ENCODE measurements at regions of chr4 and their contacts with region 1.

Region 1: GRCh38 chr4:101347557-101348366 is 436 bp upstream of the PPP3CA start:
- DNase-seq: peak; percentile 95 to 99 (median 98)
- ATAC-seq: peak; percentile 92
- H3K4me3 ChIP-seq: peak overlapping the region; percentile 99
- H3K4me3 Mint-ChIP-seq: peak overlapping the region; percentile 93 to 99 (median 98)
- H3K27ac ChIP-seq: peak overlapping the region; percentile 78
- H3K27ac Mint-ChIP-seq: peak overlapping the region; percentile 86 to 96 (median 93)
- H3K4me1 ChIP-seq: peaks cover 7 to 15% of the 10 kb centered on the region in 2 donors
- H3K4me1 Mint-ChIP-seq: peaks cover 23 to 40% (median 35%) of the 10 kb centered on the region in 7 donors
- H3K27me3 ChIP-seq: no peaks in the 10 kb centered on the region
- H3K27me3 Mint-ChIP-seq: peaks cover 5 to 63% (median 17%) of the 10 kb centered on the region in 5 donors

Region 2: DNA sequence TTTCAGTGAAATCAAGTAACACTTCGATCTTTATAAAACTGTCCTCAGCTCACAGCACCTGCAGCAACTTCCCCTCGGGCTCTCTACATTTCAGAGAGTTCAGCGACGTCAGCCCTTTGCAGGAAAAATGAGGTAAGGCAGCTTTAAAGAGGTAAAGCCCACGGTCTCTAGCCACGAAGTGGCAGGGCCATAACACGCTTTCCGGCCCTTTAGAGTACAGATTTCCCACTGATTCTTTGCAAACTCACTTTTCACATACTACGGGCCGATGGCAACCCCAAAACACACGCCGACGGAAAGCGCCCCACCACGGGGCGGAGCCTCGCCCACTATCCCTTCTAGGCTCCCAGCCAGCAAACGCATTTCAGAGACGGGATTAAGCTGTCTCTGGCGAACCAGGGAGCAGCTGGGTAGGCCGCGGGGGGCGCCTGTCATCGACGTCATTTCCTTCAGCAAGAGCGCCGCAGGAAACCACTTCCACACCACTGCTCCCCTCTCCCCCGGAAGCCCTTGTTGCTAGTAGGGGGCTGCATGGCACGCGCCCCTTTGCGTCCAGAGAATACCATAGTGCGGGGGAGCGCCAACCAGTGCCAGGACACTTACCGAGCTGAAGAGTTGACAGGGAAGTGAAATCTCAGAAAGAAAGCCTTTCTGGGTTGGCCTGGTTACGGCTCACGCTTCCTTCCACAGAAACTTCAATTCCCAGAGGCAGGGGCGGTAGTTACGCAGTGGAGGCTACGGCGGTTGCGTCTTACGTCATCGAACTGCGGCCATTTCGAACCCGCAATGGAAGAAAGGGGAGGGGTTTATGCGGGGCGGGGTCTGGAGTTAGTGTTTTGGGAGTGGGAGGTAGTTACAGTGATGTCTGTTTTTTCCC is 1784.2 kb before region 1 on chr4 and contains the start of gene TRMT10A:
- CTCF ChIA-PET with region 1: no interaction called
- POLR2A ChIA-PET with region 1: no interaction called
- intact Hi-C with region 1: loop called (anchors 1 to 2 kb)
- DNase-seq: peak; percentile 79 to 98 (median 98)
- ATAC-seq: peak; percentile 91
- H3K4me3 ChIP-seq: peak within 1 kb of the TSS; percentile 92
- H3K4me3 Mint-ChIP-seq: peak within 1 kb of the TSS; percentile 77 to 99 (median 98)
- H3K27ac ChIP-seq: peak within 1 kb of the TSS; percentile 91
- H3K27ac Mint-ChIP-seq: peak within 1 kb of the TSS; percentile 98 to 100 (median 100)
- H3K4me1 ChIP-seq: no peaks in the 10 kb centered on the region
- H3K4me1 Mint-ChIP-seq: peaks cover 0 to 33% (median 28%) of the 10 kb centered on the region in 7 donors
- H3K27me3 ChIP-seq: no peaks in the 10 kb centered on the region
- H3K27me3 Mint-ChIP-seq: peaks cover 13 to 29% (median 23%) of the 10 kb centered on the region in 5 donors
- total RNA-seq, gene TRMT10A: 3.9 to 9.1 (median 7.7) TPM

Region 3: GRCh38 chr4:100895556-100896197 is 452.1 kb before region 1 on chr4:
- CTCF ChIA-PET with region 1: no interaction called
- POLR2A ChIA-PET with region 1: no interaction called
- intact Hi-C with region 1: loop called in 1 of 2 experiments (anchors 10 kb)
- DNase-seq: peak in 5 of 9 donors; percentile 9 to 24 (median 22)
- ATAC-seq: peak; percentile 60
- H3K4me3 ChIP-seq: peak overlapping the region; percentile 49
- H3K4me3 Mint-ChIP-seq: peak overlapping the region; percentile 76 to 91 (median 83)
- H3K27ac ChIP-seq: peak overlapping the region; percentile 27
- H3K27ac Mint-ChIP-seq: peak overlapping the region; percentile 43 to 91 (median 80)
- H3K4me1 ChIP-seq: peaks cover 0 to 6% of the 10 kb centered on the region in 2 donors
- H3K4me1 Mint-ChIP-seq: peaks cover 5 to 18% (median 18%) of the 10 kb centered on the region in 7 donors
- H3K27me3 ChIP-seq: no peaks in the 10 kb centered on the region
- H3K27me3 Mint-ChIP-seq: peaks cover 0 to 8% (median 0%) of the 10 kb centered on the region in 5 donors

Region 4: DNA sequence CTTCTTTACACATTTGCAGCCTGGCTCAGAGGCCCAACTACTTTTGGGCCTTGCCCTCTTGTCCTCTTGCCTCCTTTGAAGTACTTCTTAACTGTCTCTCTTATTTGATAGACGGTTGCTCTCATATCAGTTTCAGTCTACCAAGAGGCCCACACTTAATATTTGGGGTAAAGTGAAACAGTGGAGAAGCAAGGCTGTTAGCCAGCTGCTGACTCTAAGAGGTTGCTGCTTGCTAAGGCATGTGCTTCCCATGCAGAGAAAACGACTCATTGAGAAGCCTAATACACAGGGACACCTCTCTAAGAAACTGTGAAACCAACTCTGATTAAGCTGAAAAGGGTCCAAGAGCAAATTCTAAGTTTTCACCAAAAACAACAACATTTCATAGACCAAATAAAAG is 95.0 kb before region 1 on chr4:
- CTCF ChIA-PET with region 1: no interaction called
- POLR2A ChIA-PET with region 1: no interaction called
- intact Hi-C with region 1: loop called in 1 of 2 experiments (anchors 5 kb)
- DNase-seq: no peak
- ATAC-seq: no peak
- H3K4me3 ChIP-seq: no peak overlapping the region
- H3K4me3 Mint-ChIP-seq: no peak overlapping the region
- H3K27ac ChIP-seq: no peak overlapping the region
- H3K27ac Mint-ChIP-seq: no peak overlapping the region
- H3K4me1 ChIP-seq: no peaks in the 10 kb centered on the region
- H3K4me1 Mint-ChIP-seq: peaks cover 2 to 47% (median 32%) of the 10 kb centered on the region in 7 donors
- H3K27me3 ChIP-seq: no peaks in the 10 kb centered on the region
- H3K27me3 Mint-ChIP-seq: no peaks in the 10 kb centered on the region

Region 5: GRCh38 chr4:101596781-101597552 is 249.2 kb after region 1 on chr4:
- CTCF ChIA-PET with region 1: no interaction called
- POLR2A ChIA-PET with region 1: no interaction called
- intact Hi-C with region 1: loop called in 1 of 2 experiments (anchors 10 kb)
- DNase-seq: peak in 6 of 9 donors; percentile 2 to 33 (median 25)
- ATAC-seq: peak; percentile 32
- H3K4me3 ChIP-seq: no peak overlapping the region
- H3K4me3 Mint-ChIP-seq: no peak overlapping the region
- H3K27ac ChIP-seq: no peak overlapping the region
- H3K27ac Mint-ChIP-seq: no peak overlapping the region
- H3K4me1 ChIP-seq: no peaks in the 10 kb centered on the region
- H3K4me1 Mint-ChIP-seq: no peaks in the 10 kb centered on the region
- H3K27me3 ChIP-seq: no peaks in the 10 kb centered on the region
- H3K27me3 Mint-ChIP-seq: peaks cover 0 to 3% (median 0%) of the 10 kb centered on the region in 5 donors

Region 6: DNA sequence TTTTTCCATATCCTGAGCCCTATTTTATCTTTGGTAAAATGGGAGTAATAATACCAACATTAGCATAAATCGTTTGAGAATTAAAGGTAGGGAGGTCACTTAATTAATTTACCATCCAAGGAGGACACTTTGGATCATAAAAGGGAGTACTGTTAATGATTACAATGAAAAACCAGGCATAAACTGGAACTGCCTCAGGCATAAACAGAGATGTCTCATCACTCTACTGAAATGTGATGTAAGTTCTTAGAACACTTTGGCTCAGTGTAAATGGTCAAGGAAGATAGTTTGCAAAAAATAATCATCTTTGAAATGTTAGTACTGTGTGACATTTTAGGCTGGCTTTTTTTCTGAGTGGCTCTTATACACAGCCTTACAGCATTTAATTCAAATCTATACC is 728.9 kb after region 1 on chr4:
- CTCF ChIA-PET with region 1: no interaction called
- POLR2A ChIA-PET with region 1: no interaction called
- intact Hi-C with region 1: no loop called
- DNase-seq: no peak
- ATAC-seq: no peak
- H3K4me3 ChIP-seq: no peak overlapping the region
- H3K4me3 Mint-ChIP-seq: no peak overlapping the region
- H3K27ac ChIP-seq: no peak overlapping the region
- H3K27ac Mint-ChIP-seq: no peak overlapping the region
- H3K4me1 ChIP-seq: no peaks in the 10 kb centered on the region
- H3K4me1 Mint-ChIP-seq: no peaks in the 10 kb centered on the region
- H3K27me3 ChIP-seq: no peaks in the 10 kb centered on the region
- H3K27me3 Mint-ChIP-seq: peaks cover 0 to 5% (median 0%) of the 10 kb centered on the region in 5 donors

Region 7: DNA sequence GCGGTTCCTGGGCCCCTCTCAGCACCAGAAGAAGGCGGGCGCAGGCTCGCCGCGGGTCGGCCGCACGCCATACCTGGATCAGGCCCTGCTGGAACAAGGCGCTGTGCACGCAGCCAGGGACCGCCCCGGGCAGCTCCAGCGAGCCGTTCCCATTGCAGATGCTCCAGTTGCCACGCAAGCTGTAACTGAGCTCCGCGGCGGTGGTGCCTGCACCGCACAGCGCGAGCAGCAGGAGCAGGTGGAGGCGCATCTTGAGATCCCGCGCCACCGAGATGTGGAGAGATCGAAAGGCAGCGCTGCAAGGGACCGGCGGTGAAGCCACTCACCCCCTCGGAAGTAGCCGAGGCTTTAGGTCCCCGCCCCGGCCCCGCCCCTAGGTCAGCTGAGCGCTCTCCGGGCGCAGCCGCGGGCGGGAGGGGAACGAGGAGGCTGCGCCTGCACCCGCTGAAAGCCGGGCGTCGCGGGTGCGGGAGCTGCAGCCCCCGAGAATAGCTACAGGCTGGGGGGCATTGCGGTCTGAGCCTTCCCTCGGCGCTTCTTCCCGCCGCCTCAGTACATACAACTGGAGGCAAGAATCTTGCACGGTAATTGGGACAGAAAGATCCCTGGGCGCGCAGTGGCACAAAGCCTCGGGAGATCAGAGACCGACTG is 1413.0 kb after region 1 on chr4 and contains the start of gene MANBA:
- CTCF ChIA-PET with region 1: no interaction called
- POLR2A ChIA-PET with region 1: no interaction called
- intact Hi-C with region 1: loop called in 1 of 2 experiments (anchors 10 kb)
- DNase-seq: peak; percentile 62 to 81 (median 73)
- ATAC-seq: peak; percentile 91
- H3K4me3 ChIP-seq: peak within 1 kb of the TSS; percentile 62
- H3K4me3 Mint-ChIP-seq: peak within 1 kb of the TSS; percentile 86 to 99 (median 98)
- H3K27ac ChIP-seq: peak within 1 kb of the TSS; percentile 72
- H3K27ac Mint-ChIP-seq: peak within 1 kb of the TSS; percentile 56 to 92 (median 84)
- H3K4me1 ChIP-seq: peaks cover 4 to 16% of the 10 kb centered on the region in 2 donors
- H3K4me1 Mint-ChIP-seq: peaks cover 35 to 50% (median 42%) of the 10 kb centered on the region in 7 donors
- H3K27me3 ChIP-seq: no peaks in the 10 kb centered on the region
- H3K27me3 Mint-ChIP-seq: peaks cover 0 to 13% (median 0%) of the 10 kb centered on the region in 5 donors
- total RNA-seq, gene MANBA: 15.7 to 56.4 (median 29.7) TPM

Region 8: GRCh38 chr4:102789317-102789717 is 1441.6 kb after region 1 on chr4:
- CTCF ChIA-PET with region 1: no interaction called
- POLR2A ChIA-PET with region 1: no interaction called
- intact Hi-C with region 1: no loop called
- DNase-seq: no peak
- ATAC-seq: no peak
- H3K4me3 ChIP-seq: no peak overlapping the region
- H3K4me3 Mint-ChIP-seq: no peak overlapping the region
- H3K27ac ChIP-seq: no peak overlapping the region
- H3K27ac Mint-ChIP-seq: peak overlapping the region in 2 of 9 donors; percentile 9 to 15
- H3K4me1 ChIP-seq: no peaks in the 10 kb centered on the region
- H3K4me1 Mint-ChIP-seq: peaks cover 4 to 17% (median 9%) of the 10 kb centered on the region in 7 donors
- H3K27me3 ChIP-seq: no peaks in the 10 kb centered on the region
- H3K27me3 Mint-ChIP-seq: no peaks in the 10 kb centered on the region

Region 9: DNA sequence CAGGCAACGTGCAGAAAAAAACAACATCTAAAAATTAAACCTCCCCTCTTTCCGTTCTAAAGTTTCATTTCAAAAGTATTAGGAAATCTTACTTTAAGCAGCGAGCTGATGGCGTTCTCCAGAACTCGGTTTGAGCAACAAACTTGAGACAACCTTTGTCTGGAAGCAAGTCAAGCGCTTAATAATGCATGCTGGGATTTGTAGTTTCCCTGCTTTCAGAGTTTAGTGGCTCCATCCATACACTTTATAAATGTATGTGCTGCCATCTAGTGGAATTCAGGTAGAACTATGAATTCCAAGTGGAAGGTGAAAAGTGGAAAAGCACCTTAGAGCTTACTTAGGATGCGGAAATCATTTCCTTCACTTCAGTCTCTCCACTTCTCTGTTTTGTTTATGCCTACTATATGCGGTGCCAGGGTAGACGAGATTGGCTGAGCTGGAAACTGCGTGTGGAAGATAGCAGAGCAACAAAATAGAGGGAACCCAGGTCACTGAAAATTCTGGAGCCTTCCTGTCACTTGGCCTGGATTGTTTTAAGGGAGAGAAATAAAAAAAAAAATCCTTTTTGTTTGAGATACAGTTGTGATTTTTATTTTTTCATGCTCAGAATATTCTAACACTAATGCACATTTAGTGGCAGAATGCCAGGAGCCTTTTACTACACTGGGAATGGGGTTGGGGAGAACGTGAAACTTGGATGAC is 1752.1 kb after region 1 on chr4 and contains the start of gene BDH2:
- CTCF ChIA-PET with region 1: no interaction called
- POLR2A ChIA-PET with region 1: no interaction called
- intact Hi-C with region 1: loop called in 1 of 2 experiments (anchors 2 kb)
- DNase-seq: peak in 7 of 9 donors; percentile 72 to 86 (median 83)
- ATAC-seq: peak; percentile 100
- H3K4me3 ChIP-seq: peak within 1 kb of the TSS; percentile 62
- H3K4me3 Mint-ChIP-seq: peak within 1 kb of the TSS; percentile 88 to 100 (median 94)
- H3K27ac ChIP-seq: peak within 1 kb of the TSS; percentile 69
- H3K27ac Mint-ChIP-seq: peak within 1 kb of the TSS; percentile 81 to 95 (median 92)
- H3K4me1 ChIP-seq: peaks cover 4 to 11% of the 10 kb centered on the region in 2 donors
- H3K4me1 Mint-ChIP-seq: peaks cover 22 to 45% (median 34%) of the 10 kb centered on the region in 7 donors
- H3K27me3 ChIP-seq: no peaks in the 10 kb centered on the region
- H3K27me3 Mint-ChIP-seq: no peaks in the 10 kb centered on the region
- total RNA-seq, gene BDH2: 8.4 to 21.9 (median 18.5) TPM

Measured in naive thymus-derived CD4-positive, alpha-beta T cell (primary cell).